ENCODE measurements at regions of chr2 and their contacts with region 1.

Region 1: GRCh38 chr2:183348492-183348891 is 224.2 kb downstream of the NUP35 start:
- DNase-seq: peak; percentile 20
- H3K4me3 ChIP-seq: no peak overlapping the region
- H3K27ac ChIP-seq: no peak overlapping the region
- H3K4me1 ChIP-seq: peaks cover 27% of the 10 kb centered on the region
- CTCF ChIP-seq: peak; percentile 55

Region 2: DNA sequence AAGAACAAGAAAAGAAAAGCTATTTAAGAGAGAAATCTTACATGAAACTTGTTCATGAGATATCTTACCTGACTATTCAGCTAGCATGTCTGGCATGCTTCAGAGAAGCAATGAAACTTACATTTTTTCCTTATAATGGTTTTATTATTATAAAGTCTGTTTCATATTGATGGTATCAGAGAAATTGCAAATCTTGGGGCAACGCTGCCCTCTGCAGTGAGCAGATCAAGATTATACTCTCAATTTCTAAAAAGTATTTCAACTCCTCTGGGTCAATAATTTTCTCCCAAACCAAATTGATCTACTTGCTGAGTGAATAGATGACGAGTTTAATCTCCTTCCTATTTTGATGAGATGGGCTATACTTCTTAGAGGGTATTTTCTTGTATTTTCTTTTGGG is 11.4 kb after region 1 on chr2:
- CTCF ChIA-PET with region 1: no interaction called
- POLR2A ChIA-PET with region 1: interaction called, 12 read pairs
- intact Hi-C with region 1: no loop called
- DNase-seq: no peak
- H3K4me3 ChIP-seq: no peak overlapping the region
- H3K27ac ChIP-seq: no peak overlapping the region
- H3K4me1 ChIP-seq: no peaks in the 10 kb centered on the region
- CTCF ChIP-seq: peak; percentile 31; the same call in 1 of the 2 replicates

Region 3: GRCh38 chr2:183530333-183530901 is 181.9 kb after region 1 on chr2:
- CTCF ChIA-PET with region 1: no interaction called
- POLR2A ChIA-PET with region 1: no interaction called
- intact Hi-C with region 1: no loop called
- DNase-seq: no peak
- H3K4me3 ChIP-seq: no peak overlapping the region
- H3K27ac ChIP-seq: no peak overlapping the region
- H3K4me1 ChIP-seq: no peaks in the 10 kb centered on the region
- CTCF ChIP-seq: no peak

Region 4: DNA sequence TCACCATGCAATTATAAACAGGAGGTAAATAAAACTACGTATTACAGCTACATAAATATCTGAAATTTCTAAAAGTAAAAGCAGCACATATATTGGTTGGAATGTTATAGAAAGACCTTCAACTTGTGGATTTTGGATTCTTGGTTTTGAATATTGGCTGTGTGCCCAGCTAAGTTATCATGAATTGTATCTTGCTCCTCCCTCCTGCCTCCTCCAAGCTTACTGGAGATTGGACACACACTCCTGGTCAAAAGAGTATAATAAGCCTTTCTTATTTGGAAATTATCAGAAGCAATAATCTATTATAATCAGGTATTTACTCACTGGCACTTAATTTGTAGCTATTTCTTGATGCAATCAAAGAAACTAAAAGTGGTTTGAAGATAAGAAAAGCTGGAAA is 250.3 kb after region 1 on chr2:
- CTCF ChIA-PET with region 1: no interaction called
- POLR2A ChIA-PET with region 1: no interaction called
- intact Hi-C with region 1: no loop called
- DNase-seq: no peak
- H3K4me3 ChIP-seq: no peak overlapping the region
- H3K27ac ChIP-seq: no peak overlapping the region
- H3K4me1 ChIP-seq: no peaks in the 10 kb centered on the region
- CTCF ChIP-seq: no peak

Region 5: GRCh38 chr2:183798535-183798934 is 450.0 kb after region 1 on chr2:
- CTCF ChIA-PET with region 1: no interaction called
- POLR2A ChIA-PET with region 1: no interaction called
- intact Hi-C with region 1: no loop called
- DNase-seq: no peak
- H3K4me3 ChIP-seq: no peak overlapping the region
- H3K27ac ChIP-seq: no peak overlapping the region
- H3K4me1 ChIP-seq: no peaks in the 10 kb centered on the region
- CTCF ChIP-seq: no peak